A549 (cell line): ENCODE measurements at regions of chr9 and their contacts with region 1.

Region 1: GRCh38 chr9:121383715-121384114 is 13.7 kb upstream of the STOM start:
- DNase-seq: no peak
- ATAC-seq: no peak
- H3K4me3 ChIP-seq: no peak overlapping the region
- H3K27ac ChIP-seq: no peak overlapping the region
- H3K4me1 ChIP-seq: no peaks in the 10 kb centered on the region
- CTCF ChIP-seq: no peak
- EP300 ChIP-seq: no peak
- POLR2A ChIP-seq: no peak
- RAD21 ChIP-seq: no peak

Region 2: DNA sequence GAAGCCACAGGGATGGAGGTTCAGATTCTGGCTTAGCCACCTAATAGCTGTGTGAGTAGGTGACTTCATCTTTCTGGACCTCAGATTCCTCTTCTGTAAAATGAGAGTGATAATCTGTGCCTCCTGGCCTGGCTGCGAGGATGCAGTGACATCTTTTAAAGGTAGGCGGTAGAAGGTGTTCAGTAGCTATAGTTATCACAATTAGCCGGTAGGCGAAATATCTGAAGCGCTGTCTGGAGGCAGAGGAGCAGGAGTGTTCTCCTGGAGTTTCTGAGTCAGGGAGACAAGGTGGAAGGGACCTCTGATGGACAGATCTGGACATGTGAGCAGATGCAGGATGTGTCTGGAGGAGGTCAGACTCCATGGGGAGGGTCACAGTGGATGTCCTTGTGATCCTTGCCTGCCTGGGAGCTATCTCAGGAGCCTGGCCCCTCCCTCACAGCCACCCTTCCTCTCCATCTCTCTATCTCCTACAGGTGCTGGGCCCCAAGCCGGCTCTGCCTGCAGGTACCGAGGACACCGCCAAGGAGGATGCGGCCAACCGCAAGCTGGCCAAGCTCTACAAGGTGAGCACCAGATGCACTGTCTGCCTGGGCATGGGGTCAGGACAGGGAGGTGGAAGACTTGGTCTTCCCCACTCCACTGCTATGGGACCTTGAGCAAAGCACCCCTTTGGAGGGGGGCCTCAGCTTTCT is 70.1 kb before region 1 on chr9:
- CTCF ChIA-PET with region 1: interaction called, 301 read pairs
- POLR2A ChIA-PET with region 1: no interaction called
- DNase-seq: no peak
- ATAC-seq: no peak
- H3K4me3 ChIP-seq: no peak overlapping the region
- H3K27ac ChIP-seq: no peak overlapping the region
- H3K4me1 ChIP-seq: peaks cover 12% of the 10 kb centered on the region; the same call in 2 of the 3 replicates
- CTCF ChIP-seq: no peak
- EP300 ChIP-seq: no peak
- POLR2A ChIP-seq: no peak
- RAD21 ChIP-seq: no peak

Region 3: DNA sequence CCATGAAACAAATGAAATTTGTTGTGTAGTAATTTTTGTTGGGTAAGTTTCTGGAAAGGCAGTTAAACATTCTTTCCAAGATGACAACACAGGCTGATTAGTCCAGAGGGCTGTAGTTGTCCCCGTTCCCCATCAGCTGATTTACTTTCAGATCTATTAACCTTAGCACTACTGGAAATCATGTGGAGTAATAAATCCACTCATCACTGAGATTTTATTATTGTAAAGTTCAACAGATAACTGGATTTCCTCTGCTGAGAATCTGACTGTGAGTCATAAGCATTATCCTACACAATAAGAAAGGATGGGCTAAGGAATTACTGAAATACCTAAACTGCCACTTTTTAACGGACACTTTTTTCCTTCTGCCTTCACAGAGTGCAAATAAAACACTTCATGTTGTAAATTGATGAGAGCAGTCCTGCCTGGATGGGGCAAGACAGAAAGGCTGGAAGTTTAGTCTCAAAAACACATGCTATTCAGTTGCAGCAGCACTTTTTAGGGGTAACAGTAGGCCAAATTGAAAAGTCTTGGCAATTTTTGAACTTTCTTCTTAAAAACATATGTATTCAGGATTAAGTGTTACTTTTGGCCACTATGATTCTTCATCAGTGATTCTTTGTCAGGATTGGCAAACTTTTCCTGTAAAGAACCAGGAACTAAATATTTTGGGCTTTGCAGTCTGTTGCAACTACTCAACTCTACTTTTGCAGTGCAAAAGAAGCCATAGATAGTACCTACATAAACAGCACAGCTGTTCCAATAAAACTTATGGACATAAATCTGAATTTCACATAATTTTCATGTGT is 20.7 kb before region 1 on chr9:
- CTCF ChIA-PET with region 1: no interaction called
- POLR2A ChIA-PET with region 1: no interaction called
- DNase-seq: peak in 1 of 2 experiments; percentile 48
- ATAC-seq: peak; percentile 62 to 79; a peak in 5 of 6 replicates
- H3K4me3 ChIP-seq: no peak overlapping the region; the same call in 2 of the 3 replicates
- H3K27ac ChIP-seq: peak overlapping the region; percentile 55 to 77; a peak in 5 of 6 replicates
- H3K4me1 ChIP-seq: peaks cover 88% of the 10 kb centered on the region
- CTCF ChIP-seq: no peak
- EP300 ChIP-seq: no peak
- POLR2A ChIP-seq: no peak
- RAD21 ChIP-seq: no peak